ENCODE measurements at regions of chr6 and their contacts with region 1.

Region 1: DNA sequence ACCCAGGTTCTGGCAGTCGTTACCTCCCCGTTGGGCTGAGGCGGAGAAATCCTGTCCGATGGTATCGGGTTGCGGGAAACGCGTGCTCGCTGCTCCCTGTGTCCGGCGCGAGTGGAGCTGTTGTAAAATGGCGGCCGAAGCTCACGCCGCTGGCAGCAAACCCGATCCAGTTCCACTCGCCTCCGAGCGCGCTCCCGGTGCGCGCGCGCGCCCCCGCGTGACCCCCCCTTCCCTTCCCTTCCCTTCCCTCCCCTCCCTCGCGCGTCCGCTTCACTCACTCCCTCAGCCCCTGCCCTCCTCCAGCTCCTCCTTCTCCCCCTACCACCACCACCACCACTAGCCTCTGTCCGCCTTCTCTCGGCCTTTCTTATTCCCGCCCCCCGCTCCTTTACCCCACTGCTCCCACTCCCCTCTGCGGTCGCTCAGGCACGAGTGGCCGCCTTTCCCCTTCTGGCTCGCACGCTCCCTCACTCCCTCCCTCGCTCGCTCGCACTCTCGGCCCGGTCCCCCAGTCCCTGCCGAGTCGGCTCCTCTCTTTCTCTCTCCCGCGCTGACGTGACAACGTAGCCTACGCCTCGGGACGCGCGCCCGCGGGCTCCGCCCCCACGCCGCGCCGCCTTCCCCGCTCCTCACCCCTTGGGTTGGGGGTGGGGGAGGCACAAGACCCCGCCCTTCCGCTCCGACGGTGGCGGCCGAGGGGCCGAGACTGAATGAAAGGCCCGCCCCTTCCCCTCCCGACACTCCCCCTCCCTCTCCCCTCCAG is at the start of gene SYNCRIP:
- DNase-seq: peak; percentile 98
- H3K4me3 ChIP-seq: peak within 1 kb of the TSS; percentile 94 to 100 (median 96)
- H3K27ac ChIP-seq: peak within 1 kb of the TSS; percentile 97 to 100 (median 98)
- H3K4me1 ChIP-seq: peaks cover 4 to 50% (median 34%) of the 10 kb centered on the region in 3 donors
- H3K27me3 ChIP-seq: no peaks in the 10 kb centered on the region
- CTCF ChIP-seq: no peak
- POLR2A ChIP-seq: peak in 2 of 4 donors; percentile 93 to 94
- total RNA-seq, gene SYNCRIP: 64.6 to 100 (median 82.9) TPM

Region 2: DNA sequence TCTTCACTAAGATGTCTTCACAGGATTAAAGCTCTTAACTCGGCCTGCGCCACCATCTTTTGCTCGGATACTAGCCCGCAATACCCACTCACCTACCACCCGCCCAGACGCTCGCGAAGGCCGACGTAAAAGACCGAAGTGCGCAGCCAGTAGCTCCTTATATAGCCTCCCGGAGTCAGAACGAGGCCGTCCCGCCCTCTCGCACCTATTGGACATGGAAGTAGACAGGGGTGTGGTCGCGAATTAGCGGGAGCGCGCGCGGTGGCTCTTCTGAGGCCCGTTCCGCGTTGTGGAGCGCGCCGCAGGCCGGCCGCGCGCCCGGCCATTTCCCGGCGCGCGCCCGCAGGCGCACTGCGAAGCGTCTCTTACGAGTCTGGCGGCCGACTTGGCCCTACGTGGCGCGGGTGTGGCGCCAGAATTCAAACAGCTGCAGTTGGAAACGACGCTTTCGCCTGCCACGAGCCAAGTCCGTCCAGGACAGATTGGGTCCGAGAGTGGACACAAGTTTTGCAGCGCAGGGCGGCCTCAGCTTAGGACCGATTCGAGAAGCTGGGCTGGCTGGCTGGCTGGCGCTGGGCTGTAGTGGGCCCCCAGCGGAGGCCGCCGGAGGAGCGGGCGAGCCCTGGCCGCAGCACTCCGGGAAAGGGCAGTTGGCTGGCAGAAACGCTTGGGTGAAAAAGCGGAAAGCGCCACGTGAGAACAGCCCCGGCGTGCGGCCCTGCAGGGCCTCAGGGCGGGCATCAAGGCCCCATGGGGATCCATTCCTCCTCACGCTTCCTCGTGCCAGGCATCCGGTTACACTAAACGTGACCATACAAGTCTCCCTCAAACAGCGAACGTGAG is 35.9 kb after region 1 on chr6:
- intact Hi-C with region 1: loop called (anchors 2 kb)
- DNase-seq: peak; percentile 93
- H3K4me3 ChIP-seq: peak overlapping the region; percentile 78 to 89 (median 88)
- H3K27ac ChIP-seq: peak overlapping the region; percentile 91 to 95 (median 93)
- H3K4me1 ChIP-seq: peaks cover 14 to 43% (median 16%) of the 10 kb centered on the region in 3 donors
- H3K27me3 ChIP-seq: no peaks in the 10 kb centered on the region
- CTCF ChIP-seq: peak in 1 of 6 experiments; percentile 2
- POLR2A ChIP-seq: peak in 3 of 4 donors; percentile 98 to 99 (median 99)

Region 3: GRCh38 chr6:85691478-85691877 is 48.5 kb after region 1 on chr6:
- intact Hi-C with region 1: no loop called
- DNase-seq: no peak
- H3K4me3 ChIP-seq: no peak overlapping the region
- H3K27ac ChIP-seq: no peak overlapping the region
- H3K4me1 ChIP-seq: no peaks in the 10 kb centered on the region
- H3K27me3 ChIP-seq: no peaks in the 10 kb centered on the region
- CTCF ChIP-seq: no peak
- POLR2A ChIP-seq: no peak

Region 4: DNA sequence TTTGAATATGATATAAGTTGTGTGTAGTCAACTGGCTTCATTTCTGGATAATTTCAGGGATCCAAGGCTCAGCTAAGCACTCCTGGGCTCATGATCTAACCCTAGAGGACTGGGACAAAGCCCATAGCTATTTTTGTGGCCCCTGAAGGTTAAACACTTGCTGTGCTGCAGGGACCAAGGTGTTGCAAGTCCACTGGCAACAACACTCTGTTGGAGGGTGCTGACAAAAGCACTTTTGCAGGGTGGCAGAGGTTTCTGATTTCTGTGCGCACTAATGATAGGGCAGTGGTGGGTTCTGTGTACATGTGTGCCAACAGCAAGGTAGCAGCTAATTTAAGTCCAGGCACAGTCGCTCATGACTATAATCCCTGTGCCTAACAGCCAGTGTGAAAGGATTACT is 445.0 kb after region 1 on chr6:
- intact Hi-C with region 1: no loop called
- DNase-seq: no peak
- H3K4me3 ChIP-seq: no peak overlapping the region
- H3K27ac ChIP-seq: no peak overlapping the region
- H3K4me1 ChIP-seq: no peaks in the 10 kb centered on the region
- H3K27me3 ChIP-seq: no peaks in the 10 kb centered on the region
- CTCF ChIP-seq: no peak
- POLR2A ChIP-seq: no peak